ENCODE measurements at regions of chr15 and their contacts with region 1.

Region 1: DNA sequence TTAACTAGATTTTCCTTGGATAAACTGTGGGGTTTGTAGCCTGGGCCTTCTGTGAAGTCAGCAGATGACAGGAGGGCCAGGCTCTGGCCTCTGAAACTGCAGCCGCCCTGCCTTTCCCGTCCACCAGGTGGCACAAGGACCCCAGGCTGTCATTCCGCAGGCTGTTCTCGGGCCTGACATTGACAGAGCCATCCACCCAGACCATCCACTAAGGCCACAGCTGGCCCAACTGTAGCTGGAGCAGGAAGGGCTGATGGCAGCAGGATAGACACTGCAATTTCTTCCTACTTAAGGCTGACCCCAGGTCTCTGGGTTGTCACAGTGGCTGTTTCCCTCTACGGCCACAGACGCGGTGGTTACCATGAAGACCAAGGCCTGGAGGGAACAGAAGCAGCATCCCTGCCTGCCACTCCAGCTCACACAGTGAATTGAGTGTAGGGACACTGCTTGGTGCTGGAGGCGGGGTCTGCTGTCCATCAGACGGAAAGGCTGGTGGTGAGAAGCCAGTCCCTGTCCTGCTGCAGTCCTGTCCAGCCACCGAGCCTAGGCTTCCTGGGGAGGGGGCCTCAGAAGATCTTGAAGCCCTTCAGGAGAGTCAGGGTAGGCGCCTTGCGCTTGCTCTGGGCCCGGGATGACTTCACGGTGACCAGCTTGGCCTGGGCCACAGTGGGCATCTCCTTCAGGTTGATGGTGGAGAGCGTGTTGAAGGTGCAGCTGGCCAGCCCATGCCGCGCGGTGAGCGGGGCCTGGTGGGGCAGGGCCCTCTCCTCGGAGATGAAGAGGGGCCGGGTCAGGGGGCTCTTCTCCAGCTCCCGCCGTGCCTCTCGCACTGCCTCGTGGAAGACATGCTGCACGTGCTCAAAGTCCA is 9.4 kb downstream of the SLC51B start:
- DNase-seq: peak; percentile 76
- ATAC-seq: peak; percentile 56
- H3K4me3 Mint-ChIP-seq: no peak overlapping the region
- H3K27ac Mint-ChIP-seq: no peak overlapping the region
- H3K4me1 Mint-ChIP-seq: peaks cover 23% of the 10 kb centered on the region
- H3K27me3 Mint-ChIP-seq: peaks cover 5% of the 10 kb centered on the region

Region 2: DNA sequence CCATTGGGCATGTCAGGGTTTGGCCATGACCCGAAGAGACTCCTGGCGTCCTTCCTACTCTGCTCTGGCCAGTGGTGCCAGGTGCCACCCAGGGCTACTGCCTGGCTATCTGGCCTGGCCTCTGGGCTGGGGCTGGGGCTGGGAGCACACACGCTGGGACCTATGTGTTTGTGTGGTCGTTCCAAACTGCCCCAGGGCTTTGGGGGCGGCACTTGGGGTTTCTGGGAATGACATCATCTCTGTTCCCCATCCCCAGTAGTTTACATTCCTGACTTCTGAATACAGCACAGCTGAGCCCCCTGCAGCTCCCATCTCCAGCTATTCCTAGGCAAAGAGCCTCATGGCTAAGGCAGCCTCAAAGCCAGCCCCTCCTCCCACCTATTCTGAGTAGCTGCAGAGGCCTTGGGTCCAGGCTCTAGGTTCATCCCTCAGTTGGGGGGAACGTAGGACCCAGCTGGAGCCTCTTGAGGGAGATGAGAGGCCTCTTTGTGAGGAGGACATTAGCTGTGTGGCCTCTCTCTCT is 188.5 kb before region 1 on chr15:
- CTCF ChIA-PET with region 1: no interaction called
- DNase-seq: no peak
- ATAC-seq: no peak
- H3K4me3 Mint-ChIP-seq: no peak overlapping the region
- H3K27ac Mint-ChIP-seq: no peak overlapping the region
- H3K4me1 Mint-ChIP-seq: peaks cover 9% of the 10 kb centered on the region
- H3K27me3 Mint-ChIP-seq: no peaks in the 10 kb centered on the region

Region 3: DNA sequence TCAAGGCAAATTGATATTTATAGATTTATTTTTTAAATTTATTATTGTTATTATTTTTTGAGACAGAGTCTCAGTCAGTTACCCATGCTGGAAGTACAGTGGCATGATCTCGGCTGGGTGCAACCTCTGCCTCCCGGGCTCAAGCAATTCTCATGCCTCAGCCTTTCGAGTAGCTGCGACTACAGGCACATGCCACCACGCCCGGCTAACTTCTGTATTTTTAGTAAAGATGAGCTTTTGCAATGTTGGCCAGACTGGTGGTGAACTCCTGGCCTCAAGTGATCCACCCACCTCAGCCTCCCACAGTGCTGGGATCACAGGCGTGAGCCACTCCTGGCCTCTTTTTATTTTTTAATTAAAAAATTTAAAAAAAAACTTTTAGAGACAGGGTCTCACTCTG is 83.9 kb before region 1 on chr15:
- CTCF ChIA-PET with region 1: no interaction called
- DNase-seq: no peak
- ATAC-seq: no peak
- H3K4me3 Mint-ChIP-seq: no peak overlapping the region
- H3K27ac Mint-ChIP-seq: no peak overlapping the region
- H3K4me1 Mint-ChIP-seq: peaks cover 5% of the 10 kb centered on the region
- H3K27me3 Mint-ChIP-seq: no peaks in the 10 kb centered on the region

Region 4: DNA sequence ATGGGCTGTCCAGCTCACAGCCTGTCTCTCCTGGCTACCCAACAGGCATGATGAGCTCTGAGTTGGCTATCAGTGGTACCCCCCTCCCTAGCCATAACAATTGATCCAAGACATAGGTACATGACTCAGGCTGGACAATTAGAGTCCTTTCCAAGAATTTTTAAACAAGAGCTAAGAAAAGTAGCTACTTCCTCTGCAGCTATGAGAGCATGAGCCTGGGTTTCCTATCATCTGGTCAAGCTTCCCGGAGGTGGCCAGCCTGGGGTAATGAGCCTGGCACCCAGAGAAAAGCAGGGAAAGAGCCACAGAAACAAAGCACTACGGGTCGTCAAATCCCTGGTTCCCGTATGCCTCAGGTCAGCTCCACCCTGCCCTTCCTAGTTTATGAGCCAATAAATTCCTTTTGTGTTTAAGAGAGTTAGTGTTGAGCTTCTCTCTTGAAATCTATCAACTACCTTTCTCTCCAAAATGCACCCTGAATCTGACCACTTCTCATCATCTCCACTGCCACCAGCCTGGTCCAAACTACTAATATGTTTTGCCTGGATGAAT is 11.7 kb before region 1 on chr15:
- CTCF ChIA-PET with region 1: interaction called, 18 read pairs
- DNase-seq: no peak
- ATAC-seq: no peak
- H3K4me3 Mint-ChIP-seq: no peak overlapping the region
- H3K27ac Mint-ChIP-seq: no peak overlapping the region
- H3K4me1 Mint-ChIP-seq: no peaks in the 10 kb centered on the region
- H3K27me3 Mint-ChIP-seq: no peaks in the 10 kb centered on the region

Region 5: DNA sequence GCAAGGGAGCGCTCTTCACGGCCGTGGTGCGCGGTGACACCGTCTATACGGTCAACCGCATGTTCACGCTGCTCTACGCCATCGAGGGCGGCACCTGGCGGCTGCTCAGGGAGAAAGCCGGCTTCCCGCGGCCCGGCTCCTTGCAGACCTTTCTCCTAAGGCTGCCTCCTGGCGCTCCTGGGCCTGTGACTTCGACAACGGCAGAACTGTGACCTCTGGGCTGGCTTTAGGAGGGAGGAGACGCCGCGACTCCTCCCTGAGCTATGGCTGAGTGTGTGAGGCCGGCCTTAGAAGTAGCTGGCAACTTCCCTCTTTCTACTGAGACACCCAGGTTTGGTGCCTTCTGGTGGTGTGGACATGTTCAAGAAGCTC is 23.4 kb after region 1 on chr15:
- CTCF ChIA-PET with region 1: interaction called, 17 read pairs
- DNase-seq: peak; percentile 60
- ATAC-seq: peak; percentile 60
- H3K4me3 Mint-ChIP-seq: no peak overlapping the region
- H3K27ac Mint-ChIP-seq: no peak overlapping the region
- H3K4me1 Mint-ChIP-seq: peaks cover 14% of the 10 kb centered on the region
- H3K27me3 Mint-ChIP-seq: peaks cover 43% of the 10 kb centered on the region

Region 6: DNA sequence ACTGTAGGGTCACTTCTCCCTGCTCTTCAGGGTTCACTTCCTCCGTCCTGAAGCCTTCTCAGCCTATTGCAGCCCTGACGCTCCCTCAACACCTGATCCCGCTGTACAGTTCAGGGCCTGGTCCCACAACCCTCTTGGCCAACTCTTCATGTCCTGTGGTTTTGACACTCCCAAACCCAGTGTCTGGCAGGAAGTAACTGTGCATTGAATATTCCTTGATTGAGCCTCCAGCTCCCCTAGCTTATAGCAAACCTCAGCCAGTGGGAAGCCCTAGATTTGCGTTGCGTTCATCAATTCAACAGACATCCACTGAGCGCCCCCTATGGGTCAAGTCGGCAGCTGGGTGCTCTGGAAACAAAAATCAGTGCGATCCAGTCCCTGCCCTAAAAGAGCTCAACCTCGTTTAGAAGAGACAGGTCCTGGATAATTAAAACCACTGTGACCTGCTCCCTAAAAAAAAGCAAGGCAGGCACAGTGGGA is 46.9 kb after region 1 on chr15:
- CTCF ChIA-PET with region 1: interaction called, 10 read pairs
- DNase-seq: peak; percentile 59
- ATAC-seq: no peak
- H3K4me3 Mint-ChIP-seq: no peak overlapping the region
- H3K27ac Mint-ChIP-seq: no peak overlapping the region
- H3K4me1 Mint-ChIP-seq: peaks cover 11% of the 10 kb centered on the region
- H3K27me3 Mint-ChIP-seq: no peaks in the 10 kb centered on the region

Region 7: DNA sequence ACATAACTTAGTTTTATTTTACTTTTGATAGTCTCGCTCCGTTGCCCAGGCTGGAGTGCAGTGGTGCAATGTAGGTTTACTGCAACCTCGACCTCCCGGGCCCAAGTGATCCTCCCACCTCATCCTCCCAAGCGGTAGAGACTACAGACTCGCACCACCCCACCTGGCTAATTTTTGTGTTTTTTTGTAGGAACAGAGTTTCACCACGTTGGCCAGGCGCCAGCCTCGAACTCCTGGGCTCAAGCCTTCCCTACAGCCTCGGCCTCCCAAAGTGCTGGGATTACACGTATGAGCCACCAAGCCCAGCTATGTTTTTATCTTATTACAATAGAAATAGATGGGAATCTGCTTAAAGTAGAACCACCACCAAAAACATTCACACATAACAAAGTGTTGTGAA is 244.2 kb after region 1 on chr15:
- CTCF ChIA-PET with region 1: interaction called, 26 read pairs
- DNase-seq: no peak
- ATAC-seq: no peak
- H3K4me3 Mint-ChIP-seq: peak overlapping the region; percentile 73
- H3K27ac Mint-ChIP-seq: peak overlapping the region; percentile 87
- H3K4me1 Mint-ChIP-seq: peaks cover 37% of the 10 kb centered on the region
- H3K27me3 Mint-ChIP-seq: no peaks in the 10 kb centered on the region

Measured in activated CD8-positive, alpha-beta memory T cell treated with anti-CD3 and anti-CD28 coated beads, Interleukin-2, amount 10 ng/mL, durations not matched to agents 7 days and 5 days (primary cell).